Activated CD8-positive, alpha-beta T cell treated with anti-CD3 and anti-CD28 coated beads, Interleukin-2, amount 10 ng/mL, durations not matched to agents 7 days and 5 days (primary cell): ENCODE measurements at regions of chr15 and their contacts with region 1.

Region 1: DNA sequence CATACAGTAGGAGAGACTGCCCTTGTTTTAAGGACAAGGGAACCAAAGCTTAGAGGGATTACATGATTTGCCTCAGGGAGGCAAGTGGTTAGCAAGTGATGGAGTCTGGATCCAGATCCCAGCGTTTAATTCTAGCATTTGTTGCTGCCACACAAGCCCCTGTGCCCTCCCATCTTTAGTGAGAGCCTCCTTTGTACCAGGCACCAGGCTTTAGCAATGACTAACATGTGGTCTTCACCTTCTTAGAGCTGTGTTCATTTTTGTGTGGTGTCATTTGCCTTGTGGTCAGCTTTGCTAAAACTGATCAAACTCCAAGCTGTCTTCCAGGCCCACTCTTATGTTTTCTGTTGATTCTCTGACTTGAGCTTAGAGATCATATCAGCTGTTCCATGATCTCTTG is 290.5 kb downstream of the RPLP1 start:
- DNase-seq: no peak
- ATAC-seq: peak; percentile 51
- H3K4me3 Mint-ChIP-seq: no peak overlapping the region
- H3K27ac Mint-ChIP-seq: no peak overlapping the region
- H3K4me1 Mint-ChIP-seq: peaks cover 39% of the 10 kb centered on the region
- H3K27me3 Mint-ChIP-seq: peaks cover 4% of the 10 kb centered on the region

Region 2: GRCh38 chr15:69509131-69509530 is 234.0 kb before region 1 on chr15:
- CTCF ChIA-PET with region 1: no interaction called
- POLR2A ChIA-PET with region 1: no interaction called
- DNase-seq: peak; percentile 24
- ATAC-seq: no peak
- H3K4me3 Mint-ChIP-seq: no peak overlapping the region
- H3K27ac Mint-ChIP-seq: no peak overlapping the region
- H3K4me1 Mint-ChIP-seq: peaks cover 8% of the 10 kb centered on the region
- H3K27me3 Mint-ChIP-seq: peaks cover 18% of the 10 kb centered on the region

Region 3: DNA sequence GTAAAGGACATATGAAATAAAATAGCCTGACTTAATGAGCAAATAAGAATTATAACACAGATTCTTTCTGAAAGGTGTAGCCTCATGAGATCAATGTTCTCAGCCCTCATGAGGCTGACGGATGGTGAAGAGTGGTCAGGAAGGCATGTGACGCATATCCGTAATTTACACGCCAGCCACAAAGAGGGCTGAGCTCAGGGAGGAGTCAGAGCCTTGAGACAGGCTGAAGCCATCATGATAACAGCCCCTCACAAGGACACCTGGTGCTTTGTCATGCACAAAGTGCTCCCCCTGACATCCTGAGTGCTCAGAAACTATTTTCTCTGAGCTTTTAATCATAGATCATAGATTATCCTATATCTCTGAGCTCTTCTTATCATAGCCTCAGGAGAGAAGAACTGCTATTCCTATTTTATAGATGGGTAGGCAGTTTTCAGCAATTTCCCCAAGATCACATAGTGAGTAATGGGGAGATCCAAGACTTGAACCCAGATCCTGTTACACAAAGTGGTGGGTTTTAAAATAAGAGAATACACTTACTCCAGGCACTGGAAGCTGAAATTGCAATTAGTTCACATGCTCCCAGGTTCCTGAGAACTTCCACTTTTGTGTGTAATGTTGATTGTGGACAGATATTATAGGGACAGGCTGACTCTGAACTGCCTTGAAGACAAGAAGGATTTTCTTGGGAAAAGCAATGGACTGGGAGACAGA is 23.4 kb before region 1 on chr15:
- CTCF ChIA-PET with region 1: interaction called, 15 read pairs
- POLR2A ChIA-PET with region 1: interaction called, 6 read pairs
- DNase-seq: peak; percentile 87
- ATAC-seq: peak; percentile 85
- H3K4me3 Mint-ChIP-seq: peak overlapping the region; percentile 7
- H3K27ac Mint-ChIP-seq: peak overlapping the region; percentile 93
- H3K4me1 Mint-ChIP-seq: peaks cover 96% of the 10 kb centered on the region
- H3K27me3 Mint-ChIP-seq: no peaks in the 10 kb centered on the region

Region 4: GRCh38 chr15:69755551-69756310 is 12.6 kb after region 1 on chr15:
- CTCF ChIA-PET with region 1: interaction called, 44 read pairs
- POLR2A ChIA-PET with region 1: interaction called, 14 read pairs
- DNase-seq: peak; percentile 93
- ATAC-seq: peak; percentile 76
- H3K4me3 Mint-ChIP-seq: peak overlapping the region; percentile 51
- H3K27ac Mint-ChIP-seq: peak overlapping the region; percentile 76
- H3K4me1 Mint-ChIP-seq: peaks cover 86% of the 10 kb centered on the region
- H3K27me3 Mint-ChIP-seq: peaks cover 5% of the 10 kb centered on the region

Region 5: DNA sequence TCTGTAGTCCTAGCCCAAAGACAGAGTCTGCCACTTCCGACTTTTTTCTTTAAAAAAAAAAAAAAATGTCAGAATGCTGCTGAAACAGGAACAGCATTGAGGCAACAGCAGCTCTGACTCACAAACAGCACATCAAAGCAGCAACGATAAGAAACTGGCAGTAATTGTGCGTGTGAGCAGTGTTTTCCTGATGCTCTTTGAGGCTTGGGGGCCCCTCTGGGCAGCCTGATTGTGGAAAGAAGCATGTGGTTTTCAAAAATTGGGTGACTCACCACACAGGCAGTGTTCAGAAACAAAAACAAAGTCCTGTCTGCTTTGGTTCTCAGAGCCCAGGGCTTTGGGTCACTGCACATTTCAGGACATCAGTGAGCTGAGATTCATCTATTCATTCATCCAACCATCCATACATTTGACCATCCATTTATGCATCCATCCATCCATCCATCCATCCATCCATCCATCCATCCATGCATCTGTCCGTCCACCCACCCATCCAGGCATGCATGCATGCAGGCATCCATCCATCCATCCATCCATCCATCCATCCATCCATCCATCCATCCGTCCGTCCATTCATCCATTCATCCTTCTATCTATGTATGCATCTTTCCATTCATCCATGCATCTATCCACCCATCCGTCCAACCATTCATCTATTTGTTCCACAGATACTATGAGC is 17.9 kb after region 1 on chr15:
- CTCF ChIA-PET with region 1: interaction called, 44 read pairs
- POLR2A ChIA-PET with region 1: interaction called, 14 read pairs
- DNase-seq: peak; percentile 92
- ATAC-seq: peak; percentile 69
- H3K4me3 Mint-ChIP-seq: peak overlapping the region; percentile 43
- H3K27ac Mint-ChIP-seq: peak overlapping the region; percentile 85
- H3K4me1 Mint-ChIP-seq: peaks cover 74% of the 10 kb centered on the region
- H3K27me3 Mint-ChIP-seq: peaks cover 5% of the 10 kb centered on the region